A549 (cell line): ENCODE measurements at regions of chr1 and their contacts with region 1.

Region 1: GRCh38 chr1:158124999-158125398 is 55.7 kb upstream of the CD1D start:
- DNase-seq: peak; percentile 81 to 91
- ATAC-seq: peak; percentile 93 to 95
- H3K4me3 ChIP-seq: no peak overlapping the region
- H3K27ac ChIP-seq: no peak overlapping the region
- H3K4me1 ChIP-seq: no peaks in the 10 kb centered on the region
- CTCF ChIP-seq: peak; percentile 92
- EP300 ChIP-seq: no peak
- POLR2A ChIP-seq: no peak
- RAD21 ChIP-seq: peak; percentile 95 to 99

Region 2: GRCh38 chr1:157580179-157580827 is 544.7 kb before region 1 on chr1:
- CTCF ChIA-PET with region 1: interaction called, 38 read pairs
- POLR2A ChIA-PET with region 1: no interaction called
- DNase-seq: peak; percentile 48 to 65
- ATAC-seq: peak; percentile 58 to 87; a peak in 3 of 6 replicates
- H3K4me3 ChIP-seq: no peak overlapping the region
- H3K27ac ChIP-seq: no peak overlapping the region
- H3K4me1 ChIP-seq: no peaks in the 10 kb centered on the region
- CTCF ChIP-seq: peak; percentile 76
- EP300 ChIP-seq: no peak
- POLR2A ChIP-seq: no peak
- RAD21 ChIP-seq: peak; percentile 52 to 57; a peak in 4 of 5 replicates

Region 3: DNA sequence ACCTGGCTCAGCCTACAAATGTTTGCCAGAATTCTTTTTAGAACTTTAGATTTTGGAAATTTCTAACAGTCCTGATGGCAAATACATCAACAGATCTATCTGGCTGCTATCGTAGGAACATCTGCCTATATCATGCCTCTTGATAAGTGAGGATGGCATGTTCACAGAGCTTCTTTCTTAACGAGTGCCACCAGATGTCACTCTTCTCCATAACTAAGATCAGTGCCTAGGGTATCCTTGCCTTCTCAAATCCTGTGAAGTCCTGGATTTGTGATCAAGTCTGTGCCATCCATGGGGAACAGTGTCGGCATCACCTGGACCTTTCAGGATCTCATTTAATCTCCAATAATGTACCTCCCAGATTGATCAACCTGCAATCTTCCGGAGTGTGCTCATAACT is 246.9 kb before region 1 on chr1:
- CTCF ChIA-PET with region 1: interaction called, 40 read pairs
- POLR2A ChIA-PET with region 1: no interaction called
- DNase-seq: peak; percentile 13 to 68
- ATAC-seq: peak; percentile 88 to 94
- H3K4me3 ChIP-seq: no peak overlapping the region
- H3K27ac ChIP-seq: no peak overlapping the region
- H3K4me1 ChIP-seq: no peaks in the 10 kb centered on the region
- CTCF ChIP-seq: peak; percentile 57
- EP300 ChIP-seq: no peak
- POLR2A ChIP-seq: no peak
- RAD21 ChIP-seq: peak; percentile 49 to 61; a peak in 4 of 5 replicates

Region 4: GRCh38 chr1:157948312-157949073 is 176.5 kb before region 1 on chr1:
- CTCF ChIA-PET with region 1: interaction called, 46 read pairs
- POLR2A ChIA-PET with region 1: no interaction called
- DNase-seq: peak in 1 of 2 experiments; percentile 53
- ATAC-seq: peak; percentile 87 to 89
- H3K4me3 ChIP-seq: no peak overlapping the region
- H3K27ac ChIP-seq: no peak overlapping the region
- H3K4me1 ChIP-seq: no peaks in the 10 kb centered on the region
- CTCF ChIP-seq: peak; percentile 47
- EP300 ChIP-seq: no peak
- POLR2A ChIP-seq: no peak
- RAD21 ChIP-seq: peak; percentile 57 to 78

Region 5: DNA sequence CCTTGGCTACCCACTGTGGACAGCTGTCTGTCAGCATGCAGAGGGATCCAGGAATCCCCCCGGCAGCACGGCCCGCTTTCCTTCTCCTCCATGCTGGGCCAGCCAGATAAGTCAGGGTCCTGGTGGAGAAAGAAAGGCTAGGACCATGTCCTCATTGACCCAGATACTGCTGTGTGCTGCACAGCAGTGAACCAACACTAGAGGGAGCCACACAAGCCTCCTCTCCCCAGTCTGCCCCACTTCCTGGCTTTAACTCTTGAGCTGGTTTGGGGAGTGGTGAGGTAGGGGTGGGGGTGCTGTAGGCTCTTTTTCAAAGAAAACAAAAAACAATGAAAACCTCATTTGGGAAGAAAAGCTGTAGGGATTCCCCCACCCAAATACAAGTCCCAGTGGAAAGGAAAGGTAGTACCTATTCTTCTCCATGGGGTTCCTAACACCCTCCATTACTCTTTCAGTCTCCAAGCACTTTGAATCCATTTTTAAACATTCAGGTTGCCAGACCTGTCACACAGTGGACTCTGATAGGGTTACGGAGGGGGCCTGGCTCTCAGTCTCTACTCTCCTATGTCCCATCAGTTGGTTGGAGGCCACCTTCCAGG is 29.2 kb before region 1 on chr1:
- CTCF ChIA-PET with region 1: interaction called, 46 read pairs
- POLR2A ChIA-PET with region 1: no interaction called
- DNase-seq: peak; percentile 38 to 60
- ATAC-seq: peak; percentile 72 to 90
- H3K4me3 ChIP-seq: no peak overlapping the region
- H3K27ac ChIP-seq: no peak overlapping the region
- H3K4me1 ChIP-seq: no peaks in the 10 kb centered on the region
- CTCF ChIP-seq: peak; percentile 52
- EP300 ChIP-seq: no peak
- POLR2A ChIP-seq: no peak
- RAD21 ChIP-seq: peak in 1 of 2 experiments; percentile 16; a peak in 2 of 5 replicates

Region 6: GRCh38 chr1:158140764-158141192 is 15.8 kb after region 1 on chr1:
- CTCF ChIA-PET with region 1: interaction called, 17 read pairs
- POLR2A ChIA-PET with region 1: no interaction called
- DNase-seq: no peak
- ATAC-seq: no peak
- H3K4me3 ChIP-seq: no peak overlapping the region
- H3K27ac ChIP-seq: no peak overlapping the region
- H3K4me1 ChIP-seq: 0 out of 3 replicates have a peak, but pooled peaks cover 8% of the 10 kb centered on the region
- CTCF ChIP-seq: no peak
- EP300 ChIP-seq: no peak
- POLR2A ChIP-seq: no peak
- RAD21 ChIP-seq: no peak

Region 7: GRCh38 chr1:158177700-158178450 is 52.9 kb after region 1 on chr1:
- CTCF ChIA-PET with region 1: no interaction called
- POLR2A ChIA-PET with region 1: no interaction called
- DNase-seq: peak; percentile 47 to 57
- ATAC-seq: peak; percentile 94 to 97
- H3K4me3 ChIP-seq: peak overlapping the region; percentile 40
- H3K27ac ChIP-seq: no peak overlapping the region
- H3K4me1 ChIP-seq: 0 out of 3 replicates have a peak, but pooled peaks cover 3% of the 10 kb centered on the region
- CTCF ChIP-seq: no peak
- EP300 ChIP-seq: no peak
- POLR2A ChIP-seq: no peak
- RAD21 ChIP-seq: no peak